A549 (cell line): ENCODE measurements at regions of chr1 and their contacts with region 1.

Region 1: GRCh38 chr1:204207136-204207616 is 6.6 kb downstream of the GOLT1A start:
- DNase-seq: peak; percentile 37 to 84
- ATAC-seq: peak; percentile 89 to 99
- H3K4me3 ChIP-seq: no peak overlapping the region
- H3K27ac ChIP-seq: no peak overlapping the region
- H3K4me1 ChIP-seq: peaks cover 2% of the 10 kb centered on the region; the same call in 1 of the 3 replicates
- CTCF ChIP-seq: peak; percentile 87
- EP300 ChIP-seq: no peak
- POLR2A ChIP-seq: no peak
- RAD21 ChIP-seq: peak; percentile 65 to 69

Region 2: GRCh38 chr1:204151552-204152309 is 55.4 kb before region 1 on chr1 and contains the start of gene ETNK2:
- CTCF ChIA-PET with region 1: interaction called, 34 read pairs
- POLR2A ChIA-PET with region 1: no interaction called
- DNase-seq: peak; percentile 33 to 83
- ATAC-seq: peak; percentile 55 to 69
- H3K4me3 ChIP-seq: peak within 1 kb of the TSS; percentile 96
- H3K27ac ChIP-seq: peak within 1 kb of the TSS; percentile 78 to 85
- H3K4me1 ChIP-seq: peaks cover 16% of the 10 kb centered on the region
- CTCF ChIP-seq: no peak
- EP300 ChIP-seq: no peak
- POLR2A ChIP-seq: no peak; the same call in none of the 2 replicates
- RAD21 ChIP-seq: no peak
- polyA plus RNA-seq, gene ETNK2: 5.1 and 5.2 TPM in 2 replicates

Region 3: DNA sequence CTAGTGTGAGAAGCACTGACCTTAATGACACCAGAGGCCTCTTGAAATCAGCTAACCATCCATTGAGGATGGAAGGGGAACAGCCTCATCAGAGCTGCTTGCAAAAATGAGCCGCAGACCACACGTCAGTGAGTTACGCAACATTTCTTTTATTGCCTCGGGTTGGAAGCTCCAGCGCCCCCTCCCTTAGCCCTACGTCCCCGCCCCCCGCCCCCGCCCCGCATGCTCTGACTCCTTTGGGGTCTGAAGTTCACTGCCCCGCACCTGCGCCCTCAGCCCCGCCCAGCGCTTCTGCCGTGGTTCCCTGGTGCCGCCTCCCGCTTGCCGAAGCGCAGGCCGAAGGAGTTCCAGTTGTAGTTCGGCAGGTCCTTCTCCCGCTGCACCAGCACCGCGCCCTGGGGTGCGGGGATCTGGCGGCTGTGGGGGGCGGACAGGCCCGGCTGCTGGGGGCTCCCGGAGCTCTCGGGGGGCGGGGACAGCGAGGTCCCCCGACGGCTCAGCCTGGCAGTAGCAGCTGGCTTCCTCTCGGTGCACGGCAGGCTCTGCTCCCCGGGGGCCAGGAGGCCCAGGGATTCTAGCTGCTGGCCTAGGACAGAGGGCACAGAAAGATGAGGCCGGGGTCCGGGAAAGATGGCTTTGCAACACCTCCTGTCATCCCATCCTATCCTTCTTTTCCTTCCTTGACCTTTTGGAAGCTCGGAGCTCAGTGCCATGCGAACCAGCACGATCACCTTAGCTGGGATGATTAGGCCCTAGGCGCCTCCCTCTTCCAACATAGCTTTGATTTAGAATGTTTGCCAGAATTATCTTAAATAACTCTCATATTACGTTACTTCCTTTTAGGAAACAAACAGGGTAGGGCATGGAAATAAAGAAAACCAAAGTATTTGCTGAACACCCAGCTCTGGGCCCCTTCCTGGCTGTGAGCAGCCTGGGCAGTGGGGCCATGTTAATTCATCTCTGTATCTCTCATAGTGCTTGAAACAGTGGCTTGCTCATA is 16.7 kb before region 1 on chr1:
- CTCF ChIA-PET with region 1: interaction called, 56 read pairs
- POLR2A ChIA-PET with region 1: no interaction called
- DNase-seq: no peak
- ATAC-seq: no peak
- H3K4me3 ChIP-seq: no peak overlapping the region
- H3K27ac ChIP-seq: no peak overlapping the region
- H3K4me1 ChIP-seq: peaks cover under 1% of the 10 kb centered on the region; the same call in 1 of the 3 replicates
- CTCF ChIP-seq: no peak
- EP300 ChIP-seq: no peak
- POLR2A ChIP-seq: no peak
- RAD21 ChIP-seq: no peak

Region 4: DNA sequence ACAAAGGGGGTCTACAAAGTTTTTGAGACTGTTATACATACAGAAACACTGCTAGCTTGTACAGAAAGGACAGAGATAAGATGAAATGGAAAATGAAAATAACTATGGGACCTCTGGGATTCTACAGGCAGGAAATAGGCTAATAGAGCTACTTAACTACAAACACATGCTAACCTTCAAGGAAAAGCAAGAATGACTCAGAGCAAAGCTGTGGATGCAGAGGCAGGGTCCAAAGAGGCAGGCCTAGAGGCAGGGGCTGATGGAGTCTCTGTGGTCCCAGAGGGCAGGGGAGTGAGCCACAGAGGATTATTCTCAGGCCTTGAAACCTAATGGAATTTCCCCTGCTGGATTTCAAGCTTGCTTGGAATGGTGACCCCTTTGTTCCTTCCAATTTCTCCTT is 25.4 kb after region 1 on chr1:
- CTCF ChIA-PET with region 1: interaction called, 32 read pairs
- POLR2A ChIA-PET with region 1: no interaction called
- DNase-seq: no peak
- ATAC-seq: no peak
- H3K4me3 ChIP-seq: no peak overlapping the region
- H3K27ac ChIP-seq: no peak overlapping the region
- H3K4me1 ChIP-seq: no peaks in the 10 kb centered on the region
- CTCF ChIP-seq: no peak
- EP300 ChIP-seq: no peak
- POLR2A ChIP-seq: no peak
- RAD21 ChIP-seq: no peak

Region 5: DNA sequence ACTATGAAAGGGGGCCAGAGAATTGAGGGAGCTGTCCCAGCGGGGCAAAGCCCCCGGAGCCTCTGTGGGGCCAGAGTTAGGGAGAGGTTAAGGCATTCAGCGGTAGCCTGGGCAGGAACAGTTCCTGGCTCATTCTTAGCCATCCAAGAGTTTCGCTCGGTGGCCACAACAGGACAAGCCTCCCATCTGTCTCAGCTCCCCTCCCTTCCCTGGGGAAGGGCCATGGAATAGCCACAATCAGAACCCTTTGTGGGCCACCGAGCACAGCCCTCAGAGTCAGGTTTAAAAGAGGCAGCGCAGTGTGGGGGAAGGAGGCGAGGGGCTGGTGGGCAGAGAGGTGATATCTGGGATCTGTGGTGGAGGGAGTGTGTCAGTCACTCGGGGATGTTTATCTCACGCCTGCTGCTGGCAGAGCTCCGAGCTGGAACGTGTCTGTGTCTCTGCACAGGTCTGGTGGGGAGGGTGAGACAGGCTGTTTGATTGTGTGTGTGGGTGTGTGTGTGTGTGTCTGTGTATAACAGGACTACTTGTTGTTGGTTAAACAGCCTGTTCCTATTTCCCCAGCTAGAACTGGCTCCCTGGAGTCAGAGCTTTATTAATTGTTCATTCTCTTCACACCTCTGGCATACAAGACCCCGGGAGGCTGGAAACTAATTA is 56.2 kb after region 1 on chr1:
- CTCF ChIA-PET with region 1: interaction called, 15 read pairs
- POLR2A ChIA-PET with region 1: no interaction called
- DNase-seq: no peak
- ATAC-seq: no peak
- H3K4me3 ChIP-seq: no peak overlapping the region
- H3K27ac ChIP-seq: no peak overlapping the region
- H3K4me1 ChIP-seq: peaks cover 43% of the 10 kb centered on the region
- CTCF ChIP-seq: no peak
- EP300 ChIP-seq: no peak
- POLR2A ChIP-seq: no peak
- RAD21 ChIP-seq: no peak